ENCODE measurements at regions of chr3 and their contacts with region 1.

Region 1: DNA sequence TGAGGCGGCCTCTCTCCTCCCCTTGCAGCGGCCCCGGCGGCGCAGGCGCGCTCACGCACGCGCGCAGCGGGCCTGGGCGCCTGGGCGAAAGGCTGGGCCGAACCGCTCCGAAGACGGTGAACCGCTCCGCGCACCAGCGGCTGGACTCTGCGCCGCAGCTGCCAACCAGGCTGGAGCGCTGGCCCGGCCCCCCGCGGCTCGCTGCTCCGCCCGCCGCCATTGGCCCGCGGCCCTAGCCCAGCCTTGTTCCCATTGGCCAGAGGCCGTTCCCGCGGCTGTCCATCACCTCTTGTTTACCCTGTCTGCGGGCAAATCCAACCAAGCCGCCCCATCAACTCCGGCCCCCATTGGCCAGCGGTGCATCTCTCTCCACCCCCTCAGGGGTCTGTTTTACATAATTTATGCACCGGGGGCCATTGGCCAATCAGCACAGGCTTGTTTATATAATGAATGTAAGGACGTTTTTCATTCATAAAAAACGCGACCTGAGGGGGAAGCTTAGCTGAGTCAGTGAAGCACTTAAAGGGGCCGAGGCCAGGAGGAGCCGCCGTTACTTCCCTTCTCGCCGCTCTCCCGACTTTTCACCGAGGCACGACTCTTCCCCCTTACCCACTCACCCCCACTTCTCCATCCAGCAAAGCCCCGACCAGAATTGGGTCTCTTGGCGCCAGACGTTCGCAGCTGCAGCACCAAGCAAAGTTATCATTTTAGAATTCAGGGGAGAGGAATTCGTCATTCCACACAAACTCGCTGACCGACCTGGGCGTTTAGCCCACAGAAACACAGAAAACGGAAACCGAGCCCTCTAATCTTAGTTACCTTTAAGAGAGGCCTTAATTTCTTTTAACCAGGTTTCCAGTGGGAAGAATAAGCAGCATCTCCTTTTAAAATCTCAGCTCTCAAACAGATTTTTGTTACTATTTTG is at the start of gene ETV5:
- DNase-seq: peak; percentile 91
- H3K4me3 Mint-ChIP-seq: peak within 1 kb of the TSS; percentile 90
- H3K27ac Mint-ChIP-seq: peak within 1 kb of the TSS; percentile 87
- H3K4me1 Mint-ChIP-seq: peaks cover 42% of the 10 kb centered on the region
- H3K27me3 Mint-ChIP-seq: peaks cover 74% of the 10 kb centered on the region
- total RNA-seq, gene ETV5: 3.3 and 3.6 TPM in 2 replicates

Region 2: GRCh38 chr3:185937689-185938463 is 171.3 kb before region 1 on chr3 and contains the start of gene TRA2B:
- intact Hi-C with region 1: loop called (anchors 2 kb)
- DNase-seq: peak; percentile 98
- H3K4me3 Mint-ChIP-seq: peak within 1 kb of the TSS; percentile 97
- H3K27ac Mint-ChIP-seq: peak within 1 kb of the TSS; percentile 99
- H3K4me1 Mint-ChIP-seq: peaks cover 40% of the 10 kb centered on the region
- H3K27me3 Mint-ChIP-seq: peaks cover 8% of the 10 kb centered on the region
- total RNA-seq, gene TRA2B: 279 and 312 TPM in 2 replicates

Region 3: GRCh38 chr3:185968168-185968567 is 141.0 kb before region 1 on chr3:
- intact Hi-C with region 1: no loop called
- DNase-seq: no peak
- H3K4me3 Mint-ChIP-seq: no peak overlapping the region
- H3K27ac Mint-ChIP-seq: no peak overlapping the region
- H3K4me1 Mint-ChIP-seq: no peaks in the 10 kb centered on the region
- H3K27me3 Mint-ChIP-seq: peaks cover 8% of the 10 kb centered on the region

Region 4: GRCh38 chr3:186152889-186153292 is 43.7 kb after region 1 on chr3:
- intact Hi-C with region 1: loop called (anchors 1 kb)
- DNase-seq: no peak
- H3K4me3 Mint-ChIP-seq: no peak overlapping the region
- H3K27ac Mint-ChIP-seq: no peak overlapping the region
- H3K4me1 Mint-ChIP-seq: peaks cover 17% of the 10 kb centered on the region
- H3K27me3 Mint-ChIP-seq: peaks cover 31% of the 10 kb centered on the region

Region 5: DNA sequence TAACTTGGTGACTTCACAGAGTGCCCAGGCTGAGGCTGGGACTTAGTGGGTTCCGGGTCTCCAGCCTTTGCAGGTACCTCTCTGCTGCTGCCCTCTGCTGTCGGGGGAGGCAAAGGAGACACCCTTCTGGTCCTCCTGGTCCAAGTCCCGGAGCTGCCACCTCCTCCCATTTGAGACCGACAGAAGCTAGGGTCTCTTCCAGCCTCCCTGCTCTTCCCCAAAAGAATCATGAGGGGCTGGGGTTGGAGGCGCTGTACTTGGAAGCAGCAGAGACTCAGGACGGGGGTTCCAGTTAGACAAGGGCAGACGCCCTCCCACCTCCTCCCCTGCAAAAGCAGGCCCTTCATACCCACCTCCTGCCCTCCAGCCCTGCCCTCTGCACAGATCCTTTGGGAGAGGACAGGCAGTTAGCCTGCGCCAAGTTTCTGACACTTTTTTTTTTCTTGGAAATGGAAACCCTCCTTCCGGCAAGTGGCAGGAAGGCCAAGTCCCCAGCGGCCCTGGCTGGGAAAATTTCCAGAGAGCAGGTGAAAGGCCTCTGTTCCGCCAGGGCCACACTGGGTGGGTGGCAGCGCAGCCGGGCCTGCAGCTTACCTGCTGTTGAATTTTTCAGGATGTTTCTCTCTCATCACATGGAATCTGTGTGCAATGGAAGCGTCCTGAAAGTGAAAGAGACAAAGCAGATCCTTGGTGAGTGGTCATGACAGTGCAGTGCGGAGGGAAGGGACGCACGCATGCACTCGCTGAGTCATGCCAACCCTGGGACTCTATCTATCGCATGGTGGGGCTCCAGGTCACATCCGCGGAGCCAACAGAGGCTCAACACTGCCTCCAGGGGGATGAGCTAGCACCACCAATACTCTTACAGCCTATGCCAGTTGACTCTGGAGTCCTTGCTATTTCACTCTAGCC is 133.0 kb after region 1 on chr3:
- intact Hi-C with region 1: loop called (anchors 5 kb)
- DNase-seq: peak; percentile 30
- H3K4me3 Mint-ChIP-seq: peak overlapping the region; percentile 25
- H3K27ac Mint-ChIP-seq: no peak overlapping the region
- H3K4me1 Mint-ChIP-seq: no peaks in the 10 kb centered on the region
- H3K27me3 Mint-ChIP-seq: peaks cover 19% of the 10 kb centered on the region

Region 6: DNA sequence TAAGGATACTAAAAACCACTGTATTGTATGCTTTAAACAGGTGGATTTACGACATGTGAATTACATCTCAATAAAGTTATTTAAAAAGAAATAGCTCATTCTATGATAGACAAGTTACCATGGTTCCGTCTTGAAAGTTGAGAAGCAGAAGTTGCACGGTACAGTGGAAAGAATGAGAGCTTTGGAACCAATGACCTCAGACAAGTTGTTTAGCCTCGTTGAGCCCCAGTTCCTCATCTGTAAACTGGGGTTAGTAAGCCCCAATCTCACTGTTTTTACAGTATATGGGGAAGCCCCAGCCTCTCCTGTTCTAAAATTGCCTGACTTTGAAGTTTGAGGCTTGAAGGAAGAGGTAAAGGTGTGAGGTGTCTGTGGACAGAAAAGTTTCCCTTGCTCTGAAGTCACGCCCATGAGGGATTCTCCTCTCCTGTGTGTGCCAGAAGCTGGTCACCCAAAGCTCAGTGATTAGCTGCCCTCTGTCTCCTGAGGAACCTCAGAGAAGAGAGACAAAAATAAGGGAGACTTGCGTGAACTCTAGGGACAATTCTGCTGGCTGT is 425.0 kb after region 1 on chr3:
- intact Hi-C with region 1: loop called (anchors 1 kb)
- DNase-seq: peak; percentile 59
- H3K4me3 Mint-ChIP-seq: peak overlapping the region; percentile 73
- H3K27ac Mint-ChIP-seq: peak overlapping the region; percentile 97
- H3K4me1 Mint-ChIP-seq: peaks cover 74% of the 10 kb centered on the region
- H3K27me3 Mint-ChIP-seq: no peaks in the 10 kb centered on the region

Region 7: GRCh38 chr3:186783073-186783730 is 674.0 kb after region 1 on chr3 and contains the start of gene EIF4A2:
- intact Hi-C with region 1: loop called (anchors 5 kb)
- DNase-seq: peak; percentile 89
- H3K4me3 Mint-ChIP-seq: peak within 1 kb of the TSS; percentile 95
- H3K27ac Mint-ChIP-seq: peak within 1 kb of the TSS; percentile 94
- H3K4me1 Mint-ChIP-seq: peaks cover 41% of the 10 kb centered on the region
- H3K27me3 Mint-ChIP-seq: no peaks in the 10 kb centered on the region
- total RNA-seq, gene EIF4A2: 491 and 514 TPM in 2 replicates

Measured in activated T-helper 1 cell treated with anti-CD3 and anti-CD28 coated beads, Interleukin-12 subunit alpha, Interleukin-12 subunit beta, Interleukin-2, Interleukin-4 antibody, amounts not matched to agents 30 ng/mL and 10 ng/mL and 1 ng/mL, durations not matched to agents 14 hours and 24 hours and 36 hours (primary cell).